ENCODE measurements at regions of chr1 and their contacts with region 1.

Region 1: GRCh38 chr1:56578963-56579875 is at the start of gene PLPP3:
- DNase-seq: peak; percentile 80
- H3K4me3 Mint-ChIP-seq: peak within 1 kb of the TSS; percentile 79
- H3K27ac Mint-ChIP-seq: peak within 1 kb of the TSS; percentile 48
- H3K4me1 Mint-ChIP-seq: peaks cover 33% of the 10 kb centered on the region
- H3K27me3 Mint-ChIP-seq: no peaks in the 10 kb centered on the region
- CTCF ChIP-seq: peak; percentile 63
- total RNA-seq, gene PLPP3: 17.4 and 18.9 TPM in 2 replicates

Region 2: DNA sequence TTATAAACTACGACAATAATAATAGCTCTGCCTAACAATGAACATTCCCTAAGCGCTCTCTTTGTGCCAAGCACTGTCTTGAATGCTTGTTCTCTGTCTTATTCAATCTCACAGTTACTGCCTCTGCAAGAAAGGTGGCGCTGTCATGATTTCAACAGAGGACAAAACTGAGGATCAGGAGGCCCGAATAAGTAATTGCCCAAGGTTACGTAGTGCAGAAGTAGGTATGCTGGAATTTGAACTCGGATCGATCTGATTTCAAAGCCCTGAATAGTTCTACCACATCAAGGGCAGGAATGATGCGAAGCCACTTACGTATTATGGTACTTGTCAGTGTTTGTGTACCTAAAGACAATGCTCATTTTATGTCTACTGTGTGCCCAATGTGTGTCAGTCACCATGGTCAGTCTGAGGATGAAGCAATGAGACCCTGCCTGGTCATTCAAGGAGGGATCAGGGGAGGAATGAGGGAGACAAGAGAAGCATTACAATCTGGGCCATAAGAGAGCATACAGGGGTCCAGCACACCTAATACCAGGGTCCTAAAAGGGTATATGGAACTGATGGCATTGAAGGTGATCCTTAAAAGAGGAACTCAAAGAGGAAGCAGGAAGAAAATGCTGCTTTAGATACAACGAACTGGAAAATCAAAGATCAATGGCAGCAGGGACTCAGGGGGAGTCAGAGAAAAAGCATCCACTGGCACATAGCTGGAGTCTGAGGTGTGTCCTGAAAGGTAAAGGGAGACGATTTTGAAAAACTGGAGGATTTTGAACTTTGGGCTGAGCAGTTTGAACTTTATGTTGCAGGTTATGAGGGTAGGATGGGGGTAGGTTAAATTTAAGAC is 389.1 kb before region 1 on chr1:
- CTCF ChIA-PET with region 1: interaction called, 3 read pairs
- intact Hi-C with region 1: loop called (anchors 2 kb)
- DNase-seq: peak; percentile 49
- H3K4me3 Mint-ChIP-seq: peak overlapping the region; percentile 35
- H3K27ac Mint-ChIP-seq: peak overlapping the region; percentile 99
- H3K4me1 Mint-ChIP-seq: peaks cover 15% of the 10 kb centered on the region
- H3K27me3 Mint-ChIP-seq: no peaks in the 10 kb centered on the region
- CTCF ChIP-seq: no peak

Region 3: GRCh38 chr1:56284928-56285327 is 294.3 kb before region 1 on chr1:
- CTCF ChIA-PET with region 1: interaction called, 3 read pairs
- intact Hi-C with region 1: loop called (anchors 2 kb)
- DNase-seq: peak; percentile 71
- H3K4me3 Mint-ChIP-seq: no peak overlapping the region
- H3K27ac Mint-ChIP-seq: no peak overlapping the region
- H3K4me1 Mint-ChIP-seq: peaks cover 32% of the 10 kb centered on the region
- H3K27me3 Mint-ChIP-seq: no peaks in the 10 kb centered on the region
- CTCF ChIP-seq: no peak

Region 4: DNA sequence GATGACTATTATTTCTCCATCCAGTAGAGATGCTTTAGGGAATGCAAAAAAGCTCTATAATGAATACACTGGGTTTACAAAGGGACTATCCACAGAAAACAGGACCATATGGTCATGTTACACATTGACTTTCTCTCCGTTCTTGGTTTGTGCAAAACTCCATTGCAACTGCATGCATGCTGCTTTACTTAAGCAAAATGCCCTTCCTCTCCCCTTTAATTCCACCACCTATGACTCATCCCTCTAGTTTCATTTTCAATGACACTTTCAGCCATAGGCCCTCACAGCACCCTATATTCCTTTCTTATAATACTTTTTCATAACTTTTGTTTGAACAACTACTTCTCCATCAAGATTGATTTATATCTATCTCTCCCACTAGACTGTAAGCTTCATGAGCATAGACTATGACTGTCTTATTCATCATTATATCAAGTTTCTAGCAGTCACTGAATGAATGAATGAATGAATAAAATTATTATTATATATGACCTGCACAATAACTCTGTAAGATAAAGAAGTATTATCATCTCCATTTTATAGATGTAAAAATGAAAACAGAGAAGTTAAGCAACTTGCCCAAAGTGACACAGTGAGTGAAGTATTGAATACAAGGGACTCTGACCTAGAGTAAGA is 248.7 kb before region 1 on chr1:
- CTCF ChIA-PET with region 1: no interaction called
- intact Hi-C with region 1: loop called (anchors 2 kb)
- DNase-seq: no peak
- H3K4me3 Mint-ChIP-seq: peak overlapping the region; percentile 24
- H3K27ac Mint-ChIP-seq: peak overlapping the region; percentile 94
- H3K4me1 Mint-ChIP-seq: peaks cover 46% of the 10 kb centered on the region
- H3K27me3 Mint-ChIP-seq: no peaks in the 10 kb centered on the region
- CTCF ChIP-seq: no peak

Region 5: DNA sequence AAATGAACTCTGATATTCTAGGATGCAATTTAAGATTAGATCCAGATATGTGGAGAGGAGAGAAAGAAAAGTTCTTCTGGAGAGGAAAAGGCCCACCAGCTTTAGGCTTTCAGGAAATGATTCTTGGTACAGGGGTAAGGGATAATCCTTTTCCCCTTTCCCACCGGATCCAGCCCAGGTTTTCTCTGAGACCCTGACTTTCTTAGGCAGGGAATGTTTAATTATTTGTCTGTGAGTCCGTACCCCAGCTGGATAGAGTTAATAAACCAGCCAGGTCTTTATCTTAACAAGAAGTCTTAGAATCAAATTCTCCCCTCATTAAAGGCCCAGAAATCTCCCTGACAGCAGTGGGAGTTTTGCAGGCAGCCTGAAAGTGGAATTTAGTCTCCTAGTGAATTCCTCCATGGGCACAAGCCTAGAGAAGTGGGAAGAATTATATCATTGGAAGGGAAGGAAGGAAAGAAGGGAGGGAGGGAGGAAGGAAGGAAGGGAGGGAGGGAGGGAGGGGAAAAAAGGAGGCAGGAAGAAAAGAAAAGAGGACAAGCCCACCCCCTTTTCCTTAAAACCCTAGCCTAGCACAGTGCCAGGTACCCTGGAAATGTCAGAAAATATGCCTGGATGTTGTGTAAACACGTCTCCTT is 188.9 kb before region 1 on chr1:
- CTCF ChIA-PET with region 1: no interaction called
- intact Hi-C with region 1: no loop called
- DNase-seq: peak; percentile 30
- H3K4me3 Mint-ChIP-seq: no peak overlapping the region
- H3K27ac Mint-ChIP-seq: no peak overlapping the region
- H3K4me1 Mint-ChIP-seq: peaks cover 20% of the 10 kb centered on the region
- H3K27me3 Mint-ChIP-seq: no peaks in the 10 kb centered on the region
- CTCF ChIP-seq: no peak

Region 6: GRCh38 chr1:56409094-56409691 is 170.0 kb before region 1 on chr1:
- CTCF ChIA-PET with region 1: interaction called, 9 read pairs
- intact Hi-C with region 1: loop called (anchors 1 kb)
- DNase-seq: peak; percentile 76
- H3K4me3 Mint-ChIP-seq: no peak overlapping the region
- H3K27ac Mint-ChIP-seq: no peak overlapping the region
- H3K4me1 Mint-ChIP-seq: peaks cover 19% of the 10 kb centered on the region
- H3K27me3 Mint-ChIP-seq: no peaks in the 10 kb centered on the region
- CTCF ChIP-seq: peak; percentile 68

Region 7: GRCh38 chr1:56477164-56478111 is 101.8 kb before region 1 on chr1:
- CTCF ChIA-PET with region 1: interaction called, 3 read pairs
- intact Hi-C with region 1: loop called (anchors 5 kb)
- DNase-seq: peak; percentile 52
- H3K4me3 Mint-ChIP-seq: peak overlapping the region; percentile 68
- H3K27ac Mint-ChIP-seq: no peak overlapping the region
- H3K4me1 Mint-ChIP-seq: peaks cover 10% of the 10 kb centered on the region
- H3K27me3 Mint-ChIP-seq: no peaks in the 10 kb centered on the region
- CTCF ChIP-seq: no peak

Region 8: GRCh38 chr1:56516539-56517252 is 62.5 kb before region 1 on chr1:
- CTCF ChIA-PET with region 1: interaction called, 4 read pairs
- intact Hi-C with region 1: loop called (anchors 2 kb)
- DNase-seq: peak; percentile 60
- H3K4me3 Mint-ChIP-seq: peak overlapping the region; percentile 67
- H3K27ac Mint-ChIP-seq: peak overlapping the region; percentile 96
- H3K4me1 Mint-ChIP-seq: peaks cover 42% of the 10 kb centered on the region
- H3K27me3 Mint-ChIP-seq: no peaks in the 10 kb centered on the region
- CTCF ChIP-seq: no peak

Region 9: DNA sequence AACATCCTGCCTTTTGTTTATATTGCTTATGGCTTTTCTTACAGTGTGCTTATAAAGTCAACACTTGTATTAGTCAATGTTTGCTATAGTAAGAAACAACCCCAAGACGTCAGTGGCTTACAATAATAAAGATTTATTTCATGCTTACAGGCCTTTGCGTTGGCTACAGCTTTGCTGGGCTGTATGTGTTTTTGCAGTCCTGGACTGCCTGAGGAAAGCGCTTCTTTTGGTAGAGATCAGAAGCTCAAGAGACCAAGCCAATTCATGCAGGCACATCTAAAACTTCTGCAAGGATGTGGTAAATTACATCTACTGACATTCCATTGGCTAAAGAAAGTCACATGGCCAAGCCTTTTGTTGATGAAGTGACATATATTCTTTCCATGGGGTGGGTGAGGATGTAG is 48.4 kb after region 1 on chr1:
- CTCF ChIA-PET with region 1: no interaction called
- intact Hi-C with region 1: no loop called
- DNase-seq: no peak
- H3K4me3 Mint-ChIP-seq: no peak overlapping the region
- H3K27ac Mint-ChIP-seq: no peak overlapping the region
- H3K4me1 Mint-ChIP-seq: no peaks in the 10 kb centered on the region
- H3K27me3 Mint-ChIP-seq: no peaks in the 10 kb centered on the region
- CTCF ChIP-seq: no peak

Measured in Calu3 (cell line).